ENCODE measurements at regions of chr5 and their contacts with region 1.

Region 1: DNA sequence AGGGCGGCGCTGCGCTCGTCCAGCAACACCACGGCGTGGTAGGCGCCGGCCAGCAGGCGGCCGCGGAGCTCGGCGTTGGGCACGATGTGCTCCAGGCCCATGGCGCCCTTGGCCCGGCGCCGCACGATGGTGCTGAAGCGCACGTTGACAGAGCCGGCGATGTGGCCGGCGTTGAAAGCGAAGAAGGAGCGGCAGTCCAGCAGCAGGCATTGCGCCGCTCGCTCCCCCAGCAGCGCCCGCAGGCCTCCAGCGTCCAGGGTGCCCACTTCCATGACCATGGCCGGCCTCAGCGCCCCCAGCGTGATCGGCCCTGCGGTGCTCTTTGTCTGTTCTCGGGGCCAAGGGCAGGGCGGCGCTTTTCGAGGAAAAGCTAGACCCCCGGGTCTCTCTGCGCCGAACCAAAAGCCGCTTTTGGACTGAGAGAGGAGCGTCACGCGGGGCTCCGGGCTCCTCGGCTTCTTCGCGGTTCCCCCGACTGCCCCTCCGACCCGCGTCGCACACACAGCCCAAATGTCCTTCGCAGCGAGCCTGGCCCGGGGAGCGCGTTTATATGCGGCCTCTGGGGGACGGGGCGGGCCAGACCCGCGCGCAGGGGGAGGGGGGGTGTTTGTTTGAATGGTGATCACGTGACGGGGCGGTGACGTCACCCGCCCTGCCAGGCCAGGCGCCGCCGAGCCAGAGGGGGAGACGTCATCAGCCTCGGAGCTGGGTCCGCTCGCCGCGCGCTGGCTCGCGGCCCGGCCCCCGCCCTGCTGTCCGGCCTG is at the start of gene DUSP1:
- DNase-seq: peak; percentile 99
- H3K4me3 Mint-ChIP-seq: peak within 1 kb of the TSS; percentile 88
- H3K27ac Mint-ChIP-seq: peak within 1 kb of the TSS; percentile 95
- H3K4me1 Mint-ChIP-seq: peaks cover 69% of the 10 kb centered on the region
- H3K27me3 Mint-ChIP-seq: no peaks in the 10 kb centered on the region
- CTCF ChIP-seq: peak; percentile 71
- total RNA-seq, gene DUSP1: 38.1 and 50.5 TPM in 2 replicates

Region 2: GRCh38 chr5:172714491-172715421 is 56.1 kb before region 1 on chr5:
- CTCF ChIA-PET with region 1: interaction called, 19 read pairs
- intact Hi-C with region 1: loop called (anchors 1 kb)
- DNase-seq: peak; percentile 83
- H3K4me3 Mint-ChIP-seq: no peak overlapping the region
- H3K27ac Mint-ChIP-seq: no peak overlapping the region
- H3K4me1 Mint-ChIP-seq: peaks cover 8% of the 10 kb centered on the region
- H3K27me3 Mint-ChIP-seq: peaks cover 35% of the 10 kb centered on the region
- CTCF ChIP-seq: peak; percentile 93

Region 3: DNA sequence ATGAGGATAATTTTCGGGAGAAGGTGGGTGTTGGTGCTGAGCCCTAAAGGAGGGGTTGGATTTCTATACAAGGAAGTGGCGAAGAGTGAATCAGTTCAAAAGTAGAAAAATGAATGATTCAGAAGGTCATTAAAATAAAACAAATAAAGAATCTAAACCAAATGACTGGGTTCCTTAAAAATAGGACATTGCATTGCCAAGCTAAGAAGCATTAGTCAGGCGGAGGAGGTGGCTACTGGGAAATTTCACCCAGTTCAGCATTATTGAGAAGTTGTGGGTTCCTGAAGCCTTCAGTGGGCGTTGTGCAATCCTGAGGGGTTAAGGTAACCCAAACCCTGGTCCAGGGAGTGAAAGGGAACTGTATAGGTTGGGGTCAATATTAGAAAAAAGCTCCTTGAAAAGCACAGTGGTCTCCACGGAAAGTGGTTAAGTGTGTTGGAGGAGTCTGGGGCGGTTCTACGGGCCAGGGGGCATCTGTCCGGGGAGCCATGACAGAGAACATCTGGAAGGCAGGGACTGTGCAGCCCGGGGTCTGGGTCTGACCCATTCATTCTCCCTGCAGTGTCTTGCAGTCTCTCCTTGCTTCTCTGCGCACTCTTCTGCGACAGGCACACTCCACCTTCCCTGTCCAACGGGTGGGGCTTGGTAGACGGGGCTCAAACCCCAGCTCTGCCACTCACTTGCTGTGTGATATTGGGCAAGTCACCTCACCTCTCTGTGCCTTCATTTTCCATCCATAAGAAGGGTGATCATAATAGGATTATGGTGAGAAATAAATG is 27.8 kb after region 1 on chr5:
- CTCF ChIA-PET with region 1: interaction called, 14 read pairs
- intact Hi-C with region 1: no loop called
- DNase-seq: no peak
- H3K4me3 Mint-ChIP-seq: peak overlapping the region; percentile 47
- H3K27ac Mint-ChIP-seq: peak overlapping the region; percentile 69
- H3K4me1 Mint-ChIP-seq: peaks cover 61% of the 10 kb centered on the region
- H3K27me3 Mint-ChIP-seq: no peaks in the 10 kb centered on the region
- CTCF ChIP-seq: no peak

Region 4: DNA sequence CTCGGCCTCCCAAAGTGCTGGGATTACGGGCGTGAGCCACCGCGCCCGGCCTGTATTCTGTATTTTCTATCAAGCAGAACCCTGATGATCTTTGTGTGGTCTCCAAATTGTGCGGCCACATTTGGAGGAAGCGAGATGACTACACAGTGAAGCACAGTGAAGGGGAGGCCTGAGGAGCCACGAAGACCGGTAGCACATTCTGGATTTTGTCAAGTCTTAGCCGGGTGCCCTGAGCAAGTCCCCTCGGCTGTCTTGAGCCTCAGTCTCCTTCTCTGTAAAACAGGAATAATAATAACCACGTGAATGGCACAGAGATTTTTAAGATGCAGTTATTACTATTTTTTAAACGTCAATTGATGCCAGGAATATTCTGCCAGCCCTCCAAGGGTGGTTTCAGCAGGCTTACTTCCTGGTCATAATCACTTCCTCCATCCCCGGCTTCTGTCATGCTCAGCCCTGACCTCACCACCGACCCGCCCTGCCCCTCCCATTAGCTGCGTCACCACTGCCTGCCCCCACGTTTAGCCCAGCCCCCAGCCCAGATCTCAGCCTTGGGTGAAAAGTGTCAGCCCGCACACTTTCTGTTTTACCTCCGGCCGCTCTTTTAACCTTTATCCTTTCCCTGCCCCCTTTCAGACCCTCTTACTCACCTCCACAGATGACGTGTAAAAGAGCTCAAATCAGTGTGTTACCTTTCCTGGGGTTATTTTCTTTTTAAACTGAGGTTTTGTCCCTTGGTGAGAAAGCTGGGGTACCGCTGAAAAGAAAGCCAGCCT is 36.2 kb after region 1 on chr5:
- CTCF ChIA-PET with region 1: interaction called, 20 read pairs
- intact Hi-C with region 1: loop called (anchors 5 kb)
- DNase-seq: peak; percentile 95
- H3K4me3 Mint-ChIP-seq: peak overlapping the region; percentile 68
- H3K27ac Mint-ChIP-seq: peak overlapping the region; percentile 100
- H3K4me1 Mint-ChIP-seq: peaks cover 33% of the 10 kb centered on the region
- H3K27me3 Mint-ChIP-seq: no peaks in the 10 kb centered on the region
- CTCF ChIP-seq: no peak

Region 5: DNA sequence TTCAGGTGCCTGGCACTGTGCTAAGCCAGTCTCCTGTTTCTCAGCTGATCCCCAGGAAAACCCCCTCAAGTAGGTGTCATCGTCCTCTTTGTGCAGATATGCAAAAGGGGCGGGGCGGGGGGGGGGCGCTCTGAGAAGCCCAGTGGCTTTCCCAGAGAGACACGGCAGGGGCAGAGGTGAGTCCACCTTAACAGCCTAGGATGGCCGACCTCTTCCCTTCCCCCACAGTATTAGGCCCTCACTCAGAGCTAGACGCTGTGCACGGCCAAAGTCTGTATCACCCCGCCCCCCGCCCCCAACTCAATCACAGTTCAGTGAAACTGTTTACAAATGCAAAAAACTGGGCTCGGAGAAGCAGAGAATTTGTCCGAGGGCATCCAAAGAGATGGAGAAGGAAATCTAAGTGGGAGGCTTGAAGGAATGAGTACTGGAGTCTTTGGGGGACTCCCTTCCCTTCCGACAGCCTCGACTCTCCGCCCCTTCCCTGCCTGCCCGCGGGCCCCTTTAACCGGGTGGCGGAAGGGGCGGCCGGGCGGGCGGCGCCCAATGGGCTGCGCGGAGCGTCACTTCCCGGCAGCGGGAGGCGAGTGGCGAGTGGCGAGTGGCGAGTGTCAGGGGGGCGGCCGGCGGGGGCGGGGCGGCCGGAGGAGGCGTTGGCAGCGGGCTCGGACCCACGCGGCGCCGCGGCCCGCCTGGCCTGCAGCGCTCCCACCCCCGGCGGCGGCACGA is 63.0 kb after region 1 on chr5 and contains the start of gene ERGIC1:
- CTCF ChIA-PET with region 1: interaction called, 3 read pairs
- intact Hi-C with region 1: loop called (anchors 2 kb)
- DNase-seq: peak; percentile 87
- H3K4me3 Mint-ChIP-seq: peak within 1 kb of the TSS; percentile 79
- H3K27ac Mint-ChIP-seq: peak within 1 kb of the TSS; percentile 66
- H3K4me1 Mint-ChIP-seq: peaks cover 30% of the 10 kb centered on the region
- H3K27me3 Mint-ChIP-seq: no peaks in the 10 kb centered on the region
- CTCF ChIP-seq: no peak
- total RNA-seq, gene ERGIC1: 231 and 235 TPM in 2 replicates

Region 6: DNA sequence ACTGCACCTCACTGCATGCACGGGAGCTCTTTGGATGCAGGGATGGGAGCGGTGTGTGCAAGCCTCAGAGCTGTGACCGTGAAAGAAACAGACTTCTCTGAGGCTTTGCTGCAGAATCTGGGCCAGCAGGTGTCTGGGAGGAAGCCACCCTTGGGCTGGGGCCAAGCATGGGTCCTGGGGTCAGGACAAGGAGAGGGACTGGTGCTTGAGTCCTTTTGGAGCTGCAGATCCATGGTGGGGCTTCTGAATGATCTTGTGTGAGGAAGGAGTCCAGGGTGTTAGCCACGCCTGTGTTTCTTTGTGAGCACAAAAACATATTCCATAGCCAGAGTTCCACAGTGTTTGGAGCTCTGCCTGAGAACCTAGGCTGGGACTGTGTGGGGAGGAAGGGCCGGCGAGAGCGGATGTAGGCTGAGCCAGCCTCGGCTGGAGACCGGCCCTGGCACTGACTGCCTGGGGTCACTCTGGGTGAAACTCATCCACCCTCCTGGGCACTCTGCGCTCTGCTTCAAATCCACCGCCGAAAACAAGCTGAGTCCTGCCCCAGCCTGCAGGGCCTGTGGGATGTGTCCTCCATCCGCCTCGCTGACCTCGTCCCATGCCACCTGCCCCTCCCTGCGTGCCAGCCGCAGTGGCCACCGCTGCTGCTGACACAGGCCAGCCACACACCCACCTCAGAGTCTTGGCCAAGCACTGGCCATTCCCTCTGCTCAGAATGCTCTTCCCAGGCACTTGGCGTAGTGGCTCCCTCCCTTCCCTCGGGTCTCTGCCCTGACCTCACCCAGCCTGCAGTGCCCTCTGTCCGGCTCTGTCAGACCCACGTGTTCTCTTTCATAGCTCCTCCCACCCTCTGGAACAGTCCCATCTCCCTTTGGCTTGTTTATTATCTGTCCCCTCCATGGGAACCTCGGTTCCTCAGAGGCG is 89.9 kb after region 1 on chr5:
- CTCF ChIA-PET with region 1: interaction called, 13 read pairs
- intact Hi-C with region 1: no loop called
- DNase-seq: no peak
- H3K4me3 Mint-ChIP-seq: peak overlapping the region; percentile 21
- H3K27ac Mint-ChIP-seq: peak overlapping the region; percentile 69
- H3K4me1 Mint-ChIP-seq: peaks cover 63% of the 10 kb centered on the region
- H3K27me3 Mint-ChIP-seq: no peaks in the 10 kb centered on the region
- CTCF ChIP-seq: no peak

Region 7: DNA sequence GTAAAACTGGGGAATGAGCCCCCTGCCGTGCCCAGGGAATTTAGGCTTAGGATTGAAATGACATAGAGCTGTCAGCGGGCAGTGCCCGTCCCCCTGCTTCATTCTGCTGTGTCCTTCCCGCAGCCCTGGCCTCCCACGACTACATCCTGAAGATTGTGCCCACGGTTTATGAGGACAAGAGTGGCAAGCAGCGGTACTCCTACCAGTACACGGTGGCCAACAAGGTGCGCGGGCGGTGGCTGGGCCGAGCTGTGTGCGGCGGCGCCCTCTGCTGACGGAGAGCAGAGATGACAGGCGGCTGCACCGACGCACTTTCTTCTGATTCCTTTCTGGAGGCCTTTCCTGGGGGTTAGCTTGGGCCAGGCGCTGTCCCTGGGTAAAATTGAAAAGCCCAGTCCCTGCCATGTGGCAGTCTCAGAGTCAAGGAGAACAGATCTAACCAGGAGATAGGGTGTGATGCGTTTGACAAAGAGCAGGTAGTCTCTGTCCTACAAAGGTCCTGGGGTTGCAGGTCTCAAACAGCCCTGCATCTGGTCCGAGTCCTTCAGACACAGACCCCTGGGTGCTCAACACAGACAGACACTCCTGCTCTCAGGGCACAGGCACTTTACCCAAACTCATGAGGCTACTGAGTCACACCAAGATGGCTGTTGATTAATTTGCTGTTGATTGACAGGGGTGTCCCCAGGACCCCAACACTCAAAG is 161.6 kb after region 1 on chr5:
- CTCF ChIA-PET with region 1: interaction called, 3 read pairs
- intact Hi-C with region 1: loop called (anchors 1 kb)
- DNase-seq: peak; percentile 82
- H3K4me3 Mint-ChIP-seq: no peak overlapping the region
- H3K27ac Mint-ChIP-seq: no peak overlapping the region
- H3K4me1 Mint-ChIP-seq: peaks cover 14% of the 10 kb centered on the region
- H3K27me3 Mint-ChIP-seq: no peaks in the 10 kb centered on the region
- CTCF ChIP-seq: peak; percentile 98

Measured in Calu3 (cell line).